ENCODE measurements at regions of chr2 and their contacts with region 1.

Region 1: GRCh38 chr2:136054856-136055255 is 63.1 kb downstream of the CXCR4 start:
- DNase-seq: no peak
- H3K4me3 ChIP-seq: no peak overlapping the region
- H3K27ac ChIP-seq: no peak overlapping the region
- H3K4me1 ChIP-seq: no peaks in the 10 kb centered on the region
- H3K27me3 ChIP-seq: no peaks in the 10 kb centered on the region
- CTCF ChIP-seq: no peak
- POLR2A ChIP-seq: no peak

Region 2: GRCh38 chr2:134943540-134943939 is 1111.3 kb before region 1 on chr2:
- intact Hi-C with region 1: no loop called
- DNase-seq: no peak
- H3K4me3 ChIP-seq: no peak overlapping the region
- H3K27ac ChIP-seq: no peak overlapping the region
- H3K4me1 ChIP-seq: no peaks in the 10 kb centered on the region
- H3K27me3 ChIP-seq: no peaks in the 10 kb centered on the region
- CTCF ChIP-seq: no peak
- POLR2A ChIP-seq: no peak

Region 3: DNA sequence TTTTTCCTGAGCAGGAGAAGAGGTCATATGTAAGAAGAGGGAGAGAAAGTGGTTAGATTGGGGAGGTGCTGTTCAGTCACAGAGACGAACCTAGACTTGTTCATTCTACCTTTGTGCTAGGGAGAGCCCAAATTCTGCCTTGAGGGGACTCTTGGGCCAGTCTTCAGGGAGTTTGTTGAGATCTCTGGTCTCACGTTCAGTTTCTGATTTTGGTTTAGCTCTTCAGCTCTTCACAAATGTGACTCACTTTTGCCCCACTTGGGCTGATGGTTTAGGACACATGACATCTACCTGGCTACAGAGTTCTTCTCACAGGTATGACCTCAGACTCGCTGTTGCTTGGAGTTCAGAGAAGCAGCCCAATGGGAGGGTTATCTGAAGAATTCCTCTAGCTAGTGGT is 20.2 kb before region 1 on chr2:
- intact Hi-C with region 1: loop called (anchors 1 kb)
- DNase-seq: no peak
- H3K4me3 ChIP-seq: no peak overlapping the region
- H3K27ac ChIP-seq: no peak overlapping the region
- H3K4me1 ChIP-seq: no peaks in the 10 kb centered on the region
- H3K27me3 ChIP-seq: no peaks in the 10 kb centered on the region
- CTCF ChIP-seq: no peak
- POLR2A ChIP-seq: no peak

Measured in breast epithelium (tissue), 4 donors.